Naive thymus-derived CD4-positive, alpha-beta T cell (primary cell): ENCODE measurements at regions of chr5 and their contacts with region 1.

Region 1: DNA sequence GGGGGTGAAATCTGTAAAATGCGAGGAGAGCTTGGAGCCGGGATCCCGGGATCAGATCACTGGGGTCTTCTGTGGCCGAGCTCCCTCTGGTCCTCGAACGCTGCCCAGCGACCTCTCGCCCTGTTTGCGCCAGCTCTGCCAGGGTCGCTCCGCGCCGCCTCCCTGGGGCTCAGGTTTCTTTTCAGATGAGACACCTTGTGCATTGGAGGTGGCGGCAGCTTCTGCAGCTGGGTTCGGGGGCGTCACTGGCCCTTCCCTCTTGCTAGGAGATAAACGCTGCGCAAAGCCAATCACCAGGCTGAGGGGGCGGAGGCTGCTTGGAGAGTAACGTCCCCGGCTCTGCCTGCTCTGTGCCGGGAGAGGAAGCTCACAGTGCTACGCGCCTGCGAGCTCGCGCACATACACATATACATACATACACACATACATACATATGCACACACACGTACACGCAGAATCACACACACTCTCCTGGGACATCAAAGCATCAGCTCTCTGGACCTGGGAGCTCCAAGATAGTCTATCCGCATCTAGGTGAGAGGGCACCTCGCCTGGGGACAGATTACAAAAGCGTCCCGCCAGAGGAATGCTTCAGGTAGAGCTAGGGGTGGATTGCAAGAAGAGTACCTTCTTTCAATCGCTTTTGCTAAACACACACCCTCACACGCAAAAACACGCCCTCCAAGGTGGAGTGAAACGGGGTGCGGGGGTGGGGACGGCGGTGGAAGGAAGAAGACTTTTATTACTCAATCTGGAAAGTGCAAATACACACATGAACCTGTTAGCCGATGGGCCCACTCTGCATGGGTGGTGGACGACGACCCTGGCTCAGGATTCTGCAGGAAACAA is at the start of gene ST8SIA4:
- DNase-seq: peak; percentile 70 to 95 (median 87)
- ATAC-seq: peak; percentile 82
- H3K4me3 ChIP-seq: peak within 1 kb of the TSS; percentile 83
- H3K4me3 Mint-ChIP-seq: peak within 1 kb of the TSS; percentile 88 to 99 (median 96)
- H3K27ac ChIP-seq: peak within 1 kb of the TSS; percentile 89
- H3K27ac Mint-ChIP-seq: peak within 1 kb of the TSS; percentile 86 to 98 (median 94)
- H3K4me1 ChIP-seq: peaks cover 22 to 23% of the 10 kb centered on the region in 2 donors
- H3K4me1 Mint-ChIP-seq: peaks cover 32 to 51% (median 46%) of the 10 kb centered on the region in 7 donors
- H3K27me3 ChIP-seq: no peaks in the 10 kb centered on the region
- H3K27me3 Mint-ChIP-seq: no peaks in the 10 kb centered on the region
- total RNA-seq, gene ST8SIA4: 17.5 to 54.5 (median 23.4) TPM

Region 2: GRCh38 chr5:100430268-100431195 is 472.7 kb before region 1 on chr5:
- CTCF ChIA-PET with region 1: no interaction called
- POLR2A ChIA-PET with region 1: no interaction called
- intact Hi-C with region 1: loop called in 1 of 2 experiments (anchors 2 kb)
- DNase-seq: peak in 6 of 9 donors; percentile 12 to 37 (median 28)
- ATAC-seq: peak; percentile 55
- H3K4me3 ChIP-seq: no peak overlapping the region
- H3K4me3 Mint-ChIP-seq: no peak overlapping the region
- H3K27ac ChIP-seq: no peak overlapping the region
- H3K27ac Mint-ChIP-seq: no peak overlapping the region
- H3K4me1 ChIP-seq: no peaks in the 10 kb centered on the region
- H3K4me1 Mint-ChIP-seq: no peaks in the 10 kb centered on the region
- H3K27me3 ChIP-seq: no peaks in the 10 kb centered on the region
- H3K27me3 Mint-ChIP-seq: peaks cover 0 to 3% (median 0%) of the 10 kb centered on the region in 5 donors

Region 3: GRCh38 chr5:100654895-100655294 is 248.4 kb before region 1 on chr5:
- CTCF ChIA-PET with region 1: no interaction called
- POLR2A ChIA-PET with region 1: no interaction called
- intact Hi-C with region 1: no loop called
- DNase-seq: no peak
- ATAC-seq: no peak
- H3K4me3 ChIP-seq: no peak overlapping the region
- H3K4me3 Mint-ChIP-seq: no peak overlapping the region
- H3K27ac ChIP-seq: no peak overlapping the region
- H3K27ac Mint-ChIP-seq: no peak overlapping the region
- H3K4me1 ChIP-seq: no peaks in the 10 kb centered on the region
- H3K4me1 Mint-ChIP-seq: peaks cover 0 to 11% (median 0%) of the 10 kb centered on the region in 7 donors
- H3K27me3 ChIP-seq: no peaks in the 10 kb centered on the region
- H3K27me3 Mint-ChIP-seq: peaks cover 0 to 28% (median 0%) of the 10 kb centered on the region in 5 donors

Region 4: GRCh38 chr5:100697970-100698369 is 205.3 kb before region 1 on chr5:
- CTCF ChIA-PET with region 1: no interaction called
- POLR2A ChIA-PET with region 1: no interaction called
- intact Hi-C with region 1: loop called in 1 of 2 experiments (anchors 5 kb)
- DNase-seq: no peak
- ATAC-seq: no peak
- H3K4me3 ChIP-seq: no peak overlapping the region
- H3K4me3 Mint-ChIP-seq: no peak overlapping the region
- H3K27ac ChIP-seq: no peak overlapping the region
- H3K27ac Mint-ChIP-seq: no peak overlapping the region
- H3K4me1 ChIP-seq: no peaks in the 10 kb centered on the region
- H3K4me1 Mint-ChIP-seq: peaks cover 0 to 7% (median 0%) of the 10 kb centered on the region in 7 donors
- H3K27me3 ChIP-seq: no peaks in the 10 kb centered on the region
- H3K27me3 Mint-ChIP-seq: peaks cover 0 to 10% (median 0%) of the 10 kb centered on the region in 5 donors

Region 5: DNA sequence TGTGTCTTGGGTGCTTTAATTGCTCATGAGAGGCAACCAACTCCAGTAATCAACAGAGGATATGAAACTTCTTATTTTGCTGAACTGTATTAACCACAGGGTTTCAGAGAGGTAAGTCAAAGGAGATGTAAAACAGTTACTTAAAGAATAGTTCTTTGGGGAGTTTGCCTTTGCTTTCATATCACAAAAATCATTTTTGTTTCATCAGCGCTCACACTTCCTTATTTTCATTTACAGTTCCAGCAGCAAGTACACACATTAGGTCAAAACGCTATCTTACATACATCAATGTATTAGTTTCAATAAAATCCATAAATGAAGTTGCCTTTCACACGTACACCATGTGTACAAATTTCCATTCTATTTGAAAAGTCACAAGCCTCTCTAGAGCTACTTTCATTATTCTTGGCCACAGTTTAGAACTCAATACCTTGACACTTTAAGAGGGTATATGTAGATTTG is 50.2 kb before region 1 on chr5:
- CTCF ChIA-PET with region 1: interaction called, 3 read pairs
- POLR2A ChIA-PET with region 1: interaction called, 6 read pairs
- intact Hi-C with region 1: loop called (anchors 1 to 2 kb)
- DNase-seq: peak in 2 of 9 donors; percentile 5 to 6
- ATAC-seq: peak; percentile 76
- H3K4me3 ChIP-seq: no peak overlapping the region
- H3K4me3 Mint-ChIP-seq: peak overlapping the region in 8 of 10 donors; percentile 22 to 87 (median 53)
- H3K27ac ChIP-seq: no peak overlapping the region
- H3K27ac Mint-ChIP-seq: peak overlapping the region in 8 of 9 donors; percentile 30 to 97 (median 64)
- H3K4me1 ChIP-seq: peaks cover 9 to 11% of the 10 kb centered on the region in 2 donors
- H3K4me1 Mint-ChIP-seq: peaks cover 28 to 45% (median 41%) of the 10 kb centered on the region in 7 donors
- H3K27me3 ChIP-seq: no peaks in the 10 kb centered on the region
- H3K27me3 Mint-ChIP-seq: no peaks in the 10 kb centered on the region

Region 6: DNA sequence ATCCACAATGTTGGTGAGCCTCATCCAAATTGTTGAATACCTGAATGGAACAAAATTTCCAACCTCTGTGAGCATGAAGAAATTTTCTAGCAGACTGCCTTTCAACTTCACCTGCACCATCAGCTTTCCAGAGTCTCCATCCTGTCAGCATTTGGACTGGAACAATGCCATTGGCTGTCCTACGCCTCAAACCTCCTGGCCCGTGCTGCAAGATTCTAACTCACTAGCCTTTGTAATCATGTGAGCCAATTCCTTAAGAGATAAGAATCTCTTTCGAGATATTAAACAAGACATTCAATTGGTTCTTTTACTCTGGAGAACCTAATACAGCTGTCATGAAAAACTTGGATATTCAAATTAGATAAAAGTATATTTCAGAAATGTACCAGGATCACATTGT is 36.7 kb after region 1 on chr5:
- CTCF ChIA-PET with region 1: no interaction called
- POLR2A ChIA-PET with region 1: no interaction called
- intact Hi-C with region 1: loop called in 1 of 2 experiments (anchors 2 kb)
- DNase-seq: no peak
- ATAC-seq: no peak
- H3K4me3 ChIP-seq: no peak overlapping the region
- H3K4me3 Mint-ChIP-seq: no peak overlapping the region
- H3K27ac ChIP-seq: no peak overlapping the region
- H3K27ac Mint-ChIP-seq: no peak overlapping the region
- H3K4me1 ChIP-seq: no peaks in the 10 kb centered on the region
- H3K4me1 Mint-ChIP-seq: no peaks in the 10 kb centered on the region
- H3K27me3 ChIP-seq: no peaks in the 10 kb centered on the region
- H3K27me3 Mint-ChIP-seq: no peaks in the 10 kb centered on the region

Region 7: DNA sequence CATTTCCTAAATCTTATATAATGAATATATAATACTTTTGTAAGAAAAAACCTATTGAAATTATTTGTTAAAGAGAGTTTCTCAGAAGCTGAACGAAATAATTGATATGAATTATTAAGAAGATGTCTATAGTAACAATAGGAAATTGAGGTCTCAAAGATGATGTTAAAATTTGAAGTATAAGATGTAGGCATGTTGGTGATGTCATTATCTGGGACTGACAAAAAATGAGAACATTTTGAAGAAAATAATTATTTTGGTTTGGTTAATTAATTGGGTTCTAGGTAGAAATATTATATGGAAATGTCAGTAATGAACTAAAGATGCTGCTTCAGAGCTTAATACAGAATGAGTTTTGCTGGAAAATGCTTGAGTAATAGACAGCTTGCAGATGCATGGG is 501.3 kb after region 1 on chr5:
- CTCF ChIA-PET with region 1: no interaction called
- POLR2A ChIA-PET with region 1: no interaction called
- intact Hi-C with region 1: no loop called
- DNase-seq: no peak
- ATAC-seq: no peak
- H3K4me3 ChIP-seq: no peak overlapping the region
- H3K4me3 Mint-ChIP-seq: no peak overlapping the region
- H3K27ac ChIP-seq: no peak overlapping the region
- H3K27ac Mint-ChIP-seq: no peak overlapping the region
- H3K4me1 ChIP-seq: no peaks in the 10 kb centered on the region
- H3K4me1 Mint-ChIP-seq: no peaks in the 10 kb centered on the region
- H3K27me3 ChIP-seq: no peaks in the 10 kb centered on the region
- H3K27me3 Mint-ChIP-seq: no peaks in the 10 kb centered on the region

Region 8: GRCh38 chr5:102755686-102756371 is 1852.6 kb after region 1 on chr5:
- CTCF ChIA-PET with region 1: no interaction called
- POLR2A ChIA-PET with region 1: no interaction called
- intact Hi-C with region 1: loop called in 1 of 2 experiments (anchors 10 kb)
- DNase-seq: peak; percentile 22 to 70 (median 39)
- ATAC-seq: peak; percentile 86
- H3K4me3 ChIP-seq: peak overlapping the region; percentile 83
- H3K4me3 Mint-ChIP-seq: peak overlapping the region; percentile 90 to 99 (median 94)
- H3K27ac ChIP-seq: peak overlapping the region; percentile 64
- H3K27ac Mint-ChIP-seq: peak overlapping the region; percentile 57 to 95 (median 91)
- H3K4me1 ChIP-seq: peaks cover 11 to 16% of the 10 kb centered on the region in 2 donors
- H3K4me1 Mint-ChIP-seq: peaks cover 22 to 45% (median 40%) of the 10 kb centered on the region in 7 donors
- H3K27me3 ChIP-seq: no peaks in the 10 kb centered on the region
- H3K27me3 Mint-ChIP-seq: peaks cover 0 to 15% (median under 1%) of the 10 kb centered on the region in 5 donors